ENCODE measurements at regions of chr4 and their contacts with region 1.

Region 1: DNA sequence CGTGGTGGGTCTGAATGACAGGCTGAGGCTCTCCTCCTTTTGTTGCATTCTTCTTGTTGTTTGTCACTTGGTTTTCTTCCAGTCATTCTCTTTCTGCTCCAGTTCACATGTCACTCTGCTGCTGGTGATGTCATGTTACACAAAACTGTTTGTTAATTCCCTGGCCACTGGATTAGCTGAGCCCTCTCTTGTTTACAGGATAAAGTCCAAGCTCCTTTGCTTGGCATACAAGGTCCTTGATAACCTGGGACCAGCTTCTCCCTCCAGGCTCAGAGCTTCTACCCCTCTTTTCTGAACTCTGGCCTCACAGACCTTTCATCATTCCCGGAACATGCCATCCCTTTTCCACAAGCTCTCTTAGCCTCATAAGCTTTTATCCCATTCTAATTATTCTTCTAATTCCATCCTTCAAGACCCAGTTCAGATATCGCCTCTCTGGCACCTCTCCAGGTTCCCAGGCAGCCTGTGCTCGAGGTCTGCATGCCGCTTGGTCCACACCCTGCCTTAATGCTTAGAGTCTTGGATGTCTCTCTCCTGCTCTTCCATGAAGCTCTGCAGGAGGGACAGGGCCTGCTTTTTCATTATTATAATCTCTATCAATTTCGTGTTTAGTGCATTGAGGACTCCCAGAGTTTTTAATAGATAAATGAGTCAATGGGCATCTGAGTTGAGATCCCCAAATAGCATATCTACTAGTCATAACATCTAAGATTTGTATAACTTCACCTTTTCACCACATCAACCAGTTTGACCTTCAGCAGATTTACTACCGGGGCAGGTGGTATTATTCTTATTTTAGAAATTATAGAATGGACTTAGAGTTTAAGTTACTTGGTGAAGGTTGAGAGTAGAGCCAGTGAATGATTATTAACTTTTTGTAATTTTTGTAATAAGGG is 98.7 kb downstream of the TMEM131L start:
- DNase-seq: peak; percentile 98
- ATAC-seq: peak; percentile 99
- H3K4me3 ChIP-seq: peak overlapping the region; percentile 3 to 26 (median 24); a peak in 3 of 6 replicates
- H3K27ac ChIP-seq: peak overlapping the region; percentile 78
- H3K4me1 ChIP-seq: peaks cover 70% of the 10 kb centered on the region
- H3K27me3 ChIP-seq: no peaks in the 10 kb centered on the region
- CTCF ChIP-seq: peak; percentile 11
- EP300 ChIP-seq: peak in 1 of 2 experiments; percentile 94; a peak in 2 of 4 replicates
- POLR2A ChIP-seq: no peak; a peak in 2 of 4 replicates
- RAD21 ChIP-seq: no peak

Region 2: DNA sequence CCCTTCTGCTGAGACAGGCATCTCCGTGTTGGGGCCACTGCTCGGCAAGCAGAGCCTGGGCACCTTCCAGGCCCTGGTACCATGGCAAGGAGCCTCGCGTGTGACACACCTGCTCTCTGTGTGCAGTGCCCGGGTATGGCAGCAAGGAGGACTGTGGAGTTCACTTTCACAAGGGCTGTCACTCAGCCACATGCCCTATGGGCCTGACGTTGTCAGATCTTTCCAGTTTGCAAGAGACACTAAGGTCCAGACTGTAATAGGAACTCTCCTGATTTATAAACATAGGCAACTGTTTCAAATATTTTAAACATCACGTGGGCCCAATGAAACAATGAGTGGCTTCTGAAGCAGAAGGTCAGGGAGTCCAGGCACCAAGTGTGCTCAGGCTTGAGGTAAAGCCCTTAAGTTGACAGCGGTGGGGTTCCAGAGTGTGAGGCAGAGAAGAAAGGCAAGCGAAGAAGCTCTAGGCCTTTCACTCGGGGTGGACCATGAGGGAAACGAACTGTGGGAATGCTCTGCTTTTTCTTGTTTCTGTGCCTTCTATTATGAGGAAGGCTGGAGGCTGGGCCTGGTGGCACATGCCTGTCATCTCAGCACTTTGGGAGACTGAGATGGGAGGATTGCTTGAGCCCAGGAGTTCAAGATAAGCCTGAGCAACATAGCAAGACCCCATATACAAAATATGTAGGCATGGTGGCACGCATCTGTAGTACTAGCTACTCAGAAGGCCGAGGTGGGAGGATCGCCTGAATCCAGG is 469.3 kb before region 1 on chr4:
- CTCF ChIA-PET with region 1: no interaction called
- POLR2A ChIA-PET with region 1: no interaction called
- in situ Hi-C with region 1: no loop called
- intact Hi-C with region 1: no loop called
- DNase-seq: peak; percentile 32
- ATAC-seq: peak; percentile 88
- H3K4me3 ChIP-seq: no peak overlapping the region
- H3K27ac ChIP-seq: no peak overlapping the region
- H3K4me1 ChIP-seq: peaks cover 7% of the 10 kb centered on the region
- H3K27me3 ChIP-seq: 0 out of 5 replicates have a peak, but pooled peaks cover 0 to 3% of the 10 kb centered on the region in 2 experiments
- CTCF ChIP-seq: no peak
- EP300 ChIP-seq: no peak
- POLR2A ChIP-seq: no peak
- RAD21 ChIP-seq: no peak

Region 3: GRCh38 chr4:153506341-153507309 is 58.3 kb before region 1 on chr4:
- CTCF ChIA-PET with region 1: no interaction called
- POLR2A ChIA-PET with region 1: no interaction called
- in situ Hi-C with region 1: no loop called
- intact Hi-C with region 1: loop called (anchors 5 kb)
- DNase-seq: peak; percentile 67
- ATAC-seq: peak; percentile 84
- H3K4me3 ChIP-seq: no peak overlapping the region
- H3K27ac ChIP-seq: peak overlapping the region; percentile 16
- H3K4me1 ChIP-seq: peaks cover 47% of the 10 kb centered on the region
- H3K27me3 ChIP-seq: no peaks in the 10 kb centered on the region
- CTCF ChIP-seq: no peak
- EP300 ChIP-seq: no peak; a peak in 1 of 4 replicates
- POLR2A ChIP-seq: no peak
- RAD21 ChIP-seq: no peak

Region 4: DNA sequence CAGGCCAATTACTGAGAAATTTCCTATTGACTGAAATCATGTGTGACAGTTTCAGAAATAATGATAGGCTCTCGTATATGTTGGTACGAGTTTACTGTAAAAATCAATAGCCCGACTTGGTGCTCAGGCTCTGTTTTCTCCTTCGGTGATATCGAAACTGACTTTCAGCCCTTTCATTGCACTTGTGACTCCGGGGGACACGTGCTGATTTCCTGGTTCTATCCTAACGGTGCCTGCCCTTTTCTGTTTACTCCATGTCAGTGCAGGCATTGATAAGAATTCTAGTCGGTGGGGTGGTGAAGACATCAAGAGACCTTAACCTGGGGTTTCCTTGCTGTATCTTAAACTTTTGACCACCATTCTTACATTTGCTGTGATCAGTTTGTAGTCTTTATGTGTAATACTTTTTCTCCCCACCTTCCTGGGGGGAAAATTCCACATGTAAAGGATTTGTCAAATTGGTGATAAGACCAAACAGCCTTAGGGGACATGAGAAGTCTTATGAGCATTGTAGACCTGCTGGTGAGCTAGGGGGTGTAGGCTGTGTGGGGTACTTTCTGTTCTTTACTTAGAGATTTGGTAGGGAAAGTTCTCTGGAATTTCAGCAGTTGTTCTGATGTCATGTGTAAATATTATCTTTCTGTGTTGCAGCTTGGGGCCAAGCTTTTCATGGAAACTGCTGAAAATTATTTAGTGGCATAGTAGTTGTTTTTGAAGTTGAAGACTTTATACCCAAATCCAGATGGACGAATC is 46.1 kb before region 1 on chr4:
- CTCF ChIA-PET with region 1: no interaction called
- POLR2A ChIA-PET with region 1: interaction called, 8 read pairs
- in situ Hi-C with region 1: no loop called
- intact Hi-C with region 1: loop called (anchors 5 kb)
- DNase-seq: peak; percentile 30
- ATAC-seq: peak; percentile 86
- H3K4me3 ChIP-seq: peak overlapping the region; percentile 29 to 40 (median 36); a peak in 5 of 6 replicates
- H3K27ac ChIP-seq: peak overlapping the region; percentile 48
- H3K4me1 ChIP-seq: peaks cover 30% of the 10 kb centered on the region
- H3K27me3 ChIP-seq: no peaks in the 10 kb centered on the region
- CTCF ChIP-seq: no peak
- EP300 ChIP-seq: no peak
- POLR2A ChIP-seq: no peak
- RAD21 ChIP-seq: no peak

Measured in HepG2 (cell line).